SK-N-SH (cell line): ENCODE measurements at regions of chr12 and their contacts with region 1.

Region 1: GRCh38 chr12:107992870-107993451 is 136.1 kb upstream of the WSCD2 start:
- DNase-seq: peak; percentile 46
- H3K4me3 ChIP-seq: no peak overlapping the region
- H3K27ac ChIP-seq: no peak overlapping the region
- H3K4me1 ChIP-seq: no peaks in the 10 kb centered on the region; a peak in 1 of 4 replicates
- H3K27me3 ChIP-seq: no peaks in the 10 kb centered on the region
- CTCF ChIP-seq: peak; percentile 24
- EP300 ChIP-seq: no peak
- RAD21 ChIP-seq: peak; percentile 68

Region 2: DNA sequence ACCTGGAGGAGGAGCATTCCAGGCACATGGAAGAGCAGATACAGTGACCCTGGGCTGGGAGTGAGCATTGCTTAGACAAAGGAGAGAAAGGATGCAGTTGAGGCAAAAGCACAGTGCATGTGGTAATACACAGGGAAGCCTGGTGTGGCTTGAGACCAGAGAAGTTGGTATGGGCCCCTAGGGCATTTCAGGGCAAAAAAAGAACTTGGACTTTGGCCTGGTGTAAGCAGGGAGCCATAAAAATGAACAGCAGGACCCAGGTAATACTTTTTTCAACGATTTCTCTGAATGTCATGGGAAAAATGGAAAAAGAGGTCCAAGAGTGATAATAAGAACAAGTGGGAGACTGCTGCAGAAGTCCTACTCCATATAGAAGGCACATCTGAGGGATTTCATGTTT is 54.5 kb before region 1 on chr12:
- CTCF ChIA-PET with region 1: no interaction called
- POLR2A ChIA-PET with region 1: no interaction called
- DNase-seq: no peak
- H3K4me3 ChIP-seq: no peak overlapping the region
- H3K27ac ChIP-seq: no peak overlapping the region
- H3K4me1 ChIP-seq: peaks cover 0 to 3% of the 10 kb centered on the region in 2 experiments; a peak in 1 of 4 replicates
- H3K27me3 ChIP-seq: no peaks in the 10 kb centered on the region
- CTCF ChIP-seq: no peak
- EP300 ChIP-seq: no peak
- RAD21 ChIP-seq: no peak

Region 3: DNA sequence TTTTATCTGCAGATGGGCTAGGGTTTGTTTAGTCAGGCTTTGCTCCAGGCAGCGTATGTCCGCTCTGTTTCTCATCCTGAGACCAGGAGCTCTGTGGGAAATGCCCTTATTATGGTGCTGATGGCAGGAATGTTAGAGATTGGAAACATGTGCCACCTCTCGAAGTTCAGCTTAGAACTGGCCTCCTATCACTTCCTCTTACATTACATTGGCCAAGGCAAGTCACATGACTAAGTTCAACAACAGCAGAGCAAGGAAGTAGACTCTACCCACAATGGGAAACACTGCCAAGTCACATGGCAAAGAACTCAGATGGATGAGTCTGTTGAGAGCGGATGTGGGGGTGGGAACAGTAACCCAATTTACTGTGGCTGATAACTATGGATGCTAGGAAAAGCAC is 25.8 kb before region 1 on chr12:
- CTCF ChIA-PET with region 1: interaction called, 15 read pairs
- POLR2A ChIA-PET with region 1: no interaction called
- DNase-seq: no peak
- H3K4me3 ChIP-seq: no peak overlapping the region
- H3K27ac ChIP-seq: no peak overlapping the region
- H3K4me1 ChIP-seq: no peaks in the 10 kb centered on the region; a peak in 1 of 4 replicates
- H3K27me3 ChIP-seq: no peaks in the 10 kb centered on the region
- CTCF ChIP-seq: no peak
- EP300 ChIP-seq: no peak
- RAD21 ChIP-seq: no peak

Region 4: DNA sequence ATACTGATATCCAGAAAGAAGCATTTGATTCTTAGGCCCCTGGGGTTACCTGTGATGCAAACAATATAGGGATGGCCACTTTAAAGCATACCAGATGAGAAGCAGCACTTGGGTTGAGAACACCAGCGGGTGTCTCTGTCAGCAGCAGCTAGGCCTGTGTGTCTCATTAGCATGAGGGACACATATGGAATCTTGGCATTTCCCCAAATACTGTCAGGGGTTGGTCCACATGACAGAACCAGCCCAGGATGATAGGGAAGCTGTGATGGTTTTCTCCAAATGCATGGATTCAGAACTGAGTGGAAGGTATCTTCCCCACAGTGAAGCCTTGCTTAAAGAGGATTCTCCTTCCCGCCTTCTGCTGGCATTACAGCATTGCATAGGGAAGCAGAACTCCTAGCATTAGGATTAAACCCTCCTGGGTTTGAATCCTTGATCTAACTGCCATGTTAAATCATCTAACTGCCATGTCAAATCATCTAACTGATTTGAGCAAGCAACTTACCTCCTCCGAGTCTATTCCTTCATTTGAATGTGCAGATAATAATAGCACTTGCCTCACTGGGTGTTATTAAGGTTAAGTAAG is 24.6 kb after region 1 on chr12:
- CTCF ChIA-PET with region 1: interaction called, 23 read pairs
- POLR2A ChIA-PET with region 1: no interaction called
- DNase-seq: peak; percentile 6
- H3K4me3 ChIP-seq: no peak overlapping the region
- H3K27ac ChIP-seq: no peak overlapping the region; a peak in 1 of 4 replicates
- H3K4me1 ChIP-seq: peaks cover 0 to 6% of the 10 kb centered on the region in 2 experiments; a peak in 1 of 4 replicates
- H3K27me3 ChIP-seq: no peaks in the 10 kb centered on the region
- CTCF ChIP-seq: no peak
- EP300 ChIP-seq: no peak
- RAD21 ChIP-seq: no peak

Region 5: GRCh38 chr12:108193917-108194316 is 201.0 kb after region 1 on chr12:
- CTCF ChIA-PET with region 1: interaction called, 10 read pairs
- POLR2A ChIA-PET with region 1: no interaction called
- DNase-seq: peak; percentile 69
- H3K4me3 ChIP-seq: no peak overlapping the region
- H3K27ac ChIP-seq: no peak overlapping the region; a peak in 1 of 4 replicates
- H3K4me1 ChIP-seq: peaks cover 0 to 29% of the 10 kb centered on the region in 2 experiments; a peak in 2 of 4 replicates
- H3K27me3 ChIP-seq: no peaks in the 10 kb centered on the region
- CTCF ChIP-seq: peak; percentile 62
- EP300 ChIP-seq: no peak
- RAD21 ChIP-seq: peak; percentile 81

Region 6: GRCh38 chr12:108514973-108515814 is 522.2 kb after region 1 on chr12 and contains the start of gene FICD:
- CTCF ChIA-PET with region 1: interaction called, 106 read pairs
- POLR2A ChIA-PET with region 1: no interaction called
- DNase-seq: peak; percentile 96
- H3K4me3 ChIP-seq: peak within 1 kb of the TSS; percentile 68 to 92
- H3K27ac ChIP-seq: peak within 1 kb of the TSS; percentile 40 to 41; a peak in 2 of 4 replicates
- H3K4me1 ChIP-seq: peaks cover 5 to 17% of the 10 kb centered on the region in 2 experiments; a peak in 1 of 4 replicates
- H3K27me3 ChIP-seq: no peaks in the 10 kb centered on the region
- CTCF ChIP-seq: no peak
- EP300 ChIP-seq: no peak
- RAD21 ChIP-seq: no peak
- polyA plus RNA-seq, gene FICD: 1.0 and 1.2 TPM in 2 replicates